Activated CD4-positive, alpha-beta T cell treated with anti-CD3 and anti-CD28 coated beads, Interleukin-2, amount 10 ng/mL, durations not matched to agents 7 days and 5 days (primary cell): ENCODE measurements at regions of chr12 and their contacts with region 1.

Region 1: DNA sequence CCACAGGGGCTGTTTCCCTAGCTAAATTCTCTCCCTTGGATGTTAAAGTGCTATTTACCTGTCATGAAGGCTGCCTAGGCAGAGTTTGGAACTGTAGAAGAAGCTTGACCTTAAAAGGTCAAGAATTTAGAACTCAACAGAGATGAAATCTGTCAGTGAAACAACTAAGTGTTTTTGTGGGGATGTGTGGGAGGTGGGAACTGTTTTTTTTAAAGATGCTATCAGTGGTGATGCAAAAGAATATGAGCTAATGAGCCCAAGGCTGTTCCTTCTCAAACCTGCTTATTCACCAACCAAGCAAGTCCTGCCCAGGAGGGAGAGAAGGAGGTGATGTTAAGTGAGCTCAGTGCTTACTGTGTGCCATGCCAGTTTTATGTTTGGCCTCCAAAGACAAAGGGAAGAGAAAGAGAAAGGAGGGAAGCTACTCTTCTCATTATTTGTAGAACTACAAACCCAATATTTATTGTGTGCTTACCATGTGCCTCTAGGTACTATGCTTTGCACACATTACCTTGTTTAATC is 40.8 kb upstream of the POC1B start:
- DNase-seq: no peak
- H3K4me3 Mint-ChIP-seq: no peak overlapping the region
- H3K27ac Mint-ChIP-seq: no peak overlapping the region
- H3K4me1 Mint-ChIP-seq: no peaks in the 10 kb centered on the region
- H3K27me3 Mint-ChIP-seq: no peaks in the 10 kb centered on the region

Region 2: GRCh38 chr12:89542912-89543592 is 23.6 kb before region 1 on chr12:
- CTCF ChIA-PET with region 1: interaction called, 11 read pairs
- POLR2A ChIA-PET with region 1: no interaction called
- DNase-seq: peak; percentile 78
- H3K4me3 Mint-ChIP-seq: no peak overlapping the region
- H3K27ac Mint-ChIP-seq: peak overlapping the region; percentile 15
- H3K4me1 Mint-ChIP-seq: peaks cover 3% of the 10 kb centered on the region
- H3K27me3 Mint-ChIP-seq: no peaks in the 10 kb centered on the region